ENCODE measurements at regions of chr11 and their contacts with region 1.

Region 1: DNA sequence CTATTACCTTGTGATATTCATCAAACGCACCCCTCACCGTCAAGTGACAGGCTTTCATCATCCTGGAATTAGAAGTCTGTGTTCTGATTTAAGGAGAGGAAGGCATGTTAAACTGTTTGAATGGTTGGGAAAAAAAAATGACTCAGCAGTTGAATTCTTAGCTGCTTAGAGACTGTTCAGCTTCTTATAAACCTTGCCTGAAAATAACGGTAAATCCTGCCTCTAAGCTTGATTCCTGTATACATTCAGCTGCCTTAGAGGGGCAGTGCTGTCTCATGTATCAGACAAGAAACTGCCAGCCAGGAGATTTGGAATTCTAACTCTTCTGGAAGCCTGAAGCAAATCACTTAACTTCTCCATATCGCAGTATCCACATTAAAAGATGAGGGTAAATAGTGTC is 437.4 kb downstream of the JRKL start:
- DNase-seq: peak in 1 of 4 experiments; percentile 31
- ATAC-seq: no peak
- H3K4me3 ChIP-seq: no peak overlapping the region
- H3K27ac ChIP-seq: no peak overlapping the region
- H3K4me1 ChIP-seq: no peaks in the 10 kb centered on the region
- H3K27me3 ChIP-seq: no peaks in the 10 kb centered on the region
- CTCF ChIP-seq: peak in 1 of 3 experiments; percentile 35; a peak in 2 of 6 replicates
- EP300 ChIP-seq: no peak
- POLR2A ChIP-seq: no peak
- RAD21 ChIP-seq: peak; percentile 55 to 65

Region 2: GRCh38 chr11:97140885-97141494 is 313.8 kb after region 1 on chr11:
- CTCF ChIA-PET with region 1: no interaction called
- POLR2A ChIA-PET with region 1: no interaction called
- in situ Hi-C with region 1: no loop called
- intact Hi-C with region 1: loop called (anchors 10 kb)
- DNase-seq: peak in 3 of 4 experiments; percentile 6 to 26 (median 8)
- ATAC-seq: no peak
- H3K4me3 ChIP-seq: no peak overlapping the region
- H3K27ac ChIP-seq: no peak overlapping the region
- H3K4me1 ChIP-seq: no peaks in the 10 kb centered on the region
- H3K27me3 ChIP-seq: no peaks in the 10 kb centered on the region
- CTCF ChIP-seq: peak; percentile 27 to 54 (median 41); a peak in 5 of 6 replicates
- EP300 ChIP-seq: no peak
- POLR2A ChIP-seq: no peak
- RAD21 ChIP-seq: peak; percentile 63 to 73

Measured in K562 (cell line).